Endothelial cell of umbilical vein (primary cell): ENCODE measurements at regions of chr3 and their contacts with region 1.

Region 1: GRCh38 chr3:72270072-72270681 is 485.2 kb upstream of the PROK2 start:
- DNase-seq: peak; percentile 78
- H3K4me3 ChIP-seq: no peak overlapping the region
- H3K27ac ChIP-seq: no peak overlapping the region
- H3K4me1 ChIP-seq: peaks cover 22% of the 10 kb centered on the region
- H3K27me3 ChIP-seq: peaks cover 17 to 21% of the 10 kb centered on the region in 2 experiments
- CTCF ChIP-seq: no peak
- POLR2A ChIP-seq: no peak

Region 2: GRCh38 chr3:71875461-71875947 is 394.7 kb before region 1 on chr3:
- CTCF ChIA-PET with region 1: interaction called, 7 read pairs
- POLR2A ChIA-PET with region 1: no interaction called
- dilution Hi-C with region 1: no loop called
- intact Hi-C with region 1: loop called (anchors 1 kb)
- DNase-seq: peak; percentile 74
- H3K4me3 ChIP-seq: no peak overlapping the region
- H3K27ac ChIP-seq: no peak overlapping the region
- H3K4me1 ChIP-seq: no peaks in the 10 kb centered on the region
- H3K27me3 ChIP-seq: no peaks in the 10 kb centered on the region
- CTCF ChIP-seq: peak; percentile 76 to 90
- POLR2A ChIP-seq: no peak

Region 3: DNA sequence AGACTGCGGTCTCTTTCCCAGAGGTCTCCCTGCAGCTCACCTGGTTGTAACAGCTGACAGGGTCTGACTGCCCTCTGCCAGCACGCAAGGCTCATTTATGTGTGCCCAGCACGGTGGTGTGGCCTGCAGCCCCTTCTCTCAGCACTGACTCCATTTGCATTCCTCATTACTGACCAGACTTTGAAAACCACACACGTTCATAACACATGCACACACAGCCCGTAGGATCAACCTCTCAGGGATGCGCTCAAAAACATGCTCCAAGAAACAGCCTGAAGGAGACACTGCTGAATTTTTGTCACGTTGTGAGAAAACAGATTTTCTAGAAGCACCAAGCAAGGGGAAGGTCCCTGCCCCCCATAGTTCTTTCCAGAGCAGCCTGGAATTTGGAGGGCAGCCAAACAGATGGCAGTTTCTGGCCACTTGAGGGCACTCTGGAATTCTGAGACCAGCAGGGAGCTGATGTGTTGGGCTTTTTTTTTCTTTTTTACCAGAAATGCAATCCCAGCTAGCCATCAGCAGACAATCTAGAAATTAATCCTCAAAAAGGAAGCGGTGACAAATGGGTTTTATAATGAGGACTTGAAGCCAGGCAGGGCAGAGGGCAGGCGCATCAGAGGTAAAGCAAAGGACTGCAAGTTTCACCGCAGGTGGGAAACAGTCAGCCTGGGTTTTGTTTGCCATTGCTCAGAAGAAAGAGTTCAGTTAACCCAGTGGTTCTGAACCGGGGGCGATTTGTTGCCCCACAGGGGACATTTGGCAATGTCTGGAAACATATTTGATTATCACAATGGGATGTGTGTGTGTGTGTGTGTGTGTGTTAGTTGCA is 314.7 kb before region 1 on chr3:
- CTCF ChIA-PET with region 1: interaction called, 13 read pairs
- POLR2A ChIA-PET with region 1: no interaction called
- dilution Hi-C with region 1: no loop called
- intact Hi-C with region 1: loop called (anchors 1 kb)
- DNase-seq: peak; percentile 77
- H3K4me3 ChIP-seq: no peak overlapping the region
- H3K27ac ChIP-seq: no peak overlapping the region
- H3K4me1 ChIP-seq: no peaks in the 10 kb centered on the region
- H3K27me3 ChIP-seq: peaks cover 0 to 9% of the 10 kb centered on the region in 2 experiments
- CTCF ChIP-seq: peak; percentile 65 to 77
- POLR2A ChIP-seq: no peak

Region 4: DNA sequence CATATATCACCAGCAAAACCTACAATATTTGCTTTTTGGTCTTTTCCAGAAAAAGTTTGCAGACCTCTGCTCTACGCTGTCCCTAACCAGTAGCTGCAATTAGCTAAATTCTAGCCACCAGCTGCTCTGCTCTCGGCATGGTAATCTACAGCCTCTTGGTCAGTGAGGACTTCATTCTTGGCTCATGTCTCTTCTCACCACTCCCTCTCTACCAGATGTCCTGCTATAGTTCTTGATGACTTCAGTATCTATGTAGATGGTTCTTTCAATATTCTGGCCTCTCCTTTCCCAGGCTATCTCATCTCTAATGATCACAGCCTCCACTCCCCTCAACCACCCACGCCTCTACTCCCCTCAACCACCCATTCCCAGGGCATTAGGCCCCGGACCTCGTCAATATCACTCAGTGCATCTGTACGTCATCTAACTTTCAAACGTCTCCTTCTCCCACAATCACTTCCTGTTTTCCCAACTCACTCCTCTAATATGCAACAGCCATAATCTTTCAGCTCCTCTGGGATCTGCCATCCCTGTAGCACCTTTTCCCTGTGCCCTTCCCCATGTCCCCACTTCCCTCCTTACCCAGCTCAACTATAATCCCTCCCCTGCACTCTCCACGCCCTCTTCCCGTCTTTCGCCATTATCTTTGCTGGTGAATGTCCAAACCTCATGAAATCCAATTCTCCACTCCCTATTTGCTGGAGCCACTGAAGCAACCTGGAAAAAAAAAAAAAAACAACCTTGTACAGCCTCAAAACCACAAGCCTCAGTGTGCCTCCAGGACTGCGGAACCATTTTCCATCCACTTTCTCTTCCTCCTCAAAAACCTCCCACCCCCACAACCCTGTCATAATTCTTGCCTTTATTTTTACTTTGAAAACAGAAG is 55.9 kb before region 1 on chr3:
- CTCF ChIA-PET with region 1: no interaction called
- POLR2A ChIA-PET with region 1: no interaction called
- dilution Hi-C with region 1: no loop called
- intact Hi-C with region 1: no loop called
- DNase-seq: no peak
- H3K4me3 ChIP-seq: no peak overlapping the region
- H3K27ac ChIP-seq: no peak overlapping the region
- H3K4me1 ChIP-seq: no peaks in the 10 kb centered on the region
- H3K27me3 ChIP-seq: peaks cover 0 to 2% of the 10 kb centered on the region in 2 experiments
- CTCF ChIP-seq: no peak
- POLR2A ChIP-seq: no peak

Region 5: DNA sequence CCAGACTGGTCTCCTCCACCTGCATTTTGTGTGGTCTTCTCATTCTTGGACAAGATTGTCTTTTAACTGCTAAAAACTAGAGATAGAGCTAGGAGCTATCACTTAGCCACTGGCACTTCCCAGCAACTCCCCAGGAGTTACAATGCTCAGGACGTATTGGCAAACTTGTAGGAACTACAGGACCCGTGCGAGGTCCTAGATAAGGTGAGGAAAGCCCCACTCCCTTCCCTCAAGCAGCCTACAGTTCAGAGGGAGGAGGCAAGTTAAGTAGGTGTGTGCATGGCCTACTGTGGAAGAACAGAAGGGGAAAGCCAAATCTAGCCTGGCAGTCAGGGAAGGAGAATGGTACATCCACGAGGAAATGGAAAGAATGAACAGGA is 19.5 kb after region 1 on chr3:
- CTCF ChIA-PET with region 1: interaction called, 3 read pairs
- POLR2A ChIA-PET with region 1: no interaction called
- dilution Hi-C with region 1: no loop called
- intact Hi-C with region 1: loop called (anchors 2 kb)
- DNase-seq: no peak
- H3K4me3 ChIP-seq: no peak overlapping the region
- H3K27ac ChIP-seq: no peak overlapping the region
- H3K4me1 ChIP-seq: no peaks in the 10 kb centered on the region
- H3K27me3 ChIP-seq: peaks cover 83 to 91% of the 10 kb centered on the region in 2 experiments
- CTCF ChIP-seq: no peak
- POLR2A ChIP-seq: no peak

Region 6: GRCh38 chr3:72299321-72299802 is 29.2 kb after region 1 on chr3:
- CTCF ChIA-PET with region 1: interaction called, 3 read pairs
- POLR2A ChIA-PET with region 1: interaction called, 3 read pairs
- dilution Hi-C with region 1: no loop called
- intact Hi-C with region 1: loop called (anchors 2 kb)
- DNase-seq: peak; percentile 96
- H3K4me3 ChIP-seq: no peak overlapping the region
- H3K27ac ChIP-seq: no peak overlapping the region
- H3K4me1 ChIP-seq: peaks cover 23% of the 10 kb centered on the region
- H3K27me3 ChIP-seq: peaks cover 75 to 76% of the 10 kb centered on the region in 2 experiments
- CTCF ChIP-seq: no peak
- POLR2A ChIP-seq: no peak

Region 7: DNA sequence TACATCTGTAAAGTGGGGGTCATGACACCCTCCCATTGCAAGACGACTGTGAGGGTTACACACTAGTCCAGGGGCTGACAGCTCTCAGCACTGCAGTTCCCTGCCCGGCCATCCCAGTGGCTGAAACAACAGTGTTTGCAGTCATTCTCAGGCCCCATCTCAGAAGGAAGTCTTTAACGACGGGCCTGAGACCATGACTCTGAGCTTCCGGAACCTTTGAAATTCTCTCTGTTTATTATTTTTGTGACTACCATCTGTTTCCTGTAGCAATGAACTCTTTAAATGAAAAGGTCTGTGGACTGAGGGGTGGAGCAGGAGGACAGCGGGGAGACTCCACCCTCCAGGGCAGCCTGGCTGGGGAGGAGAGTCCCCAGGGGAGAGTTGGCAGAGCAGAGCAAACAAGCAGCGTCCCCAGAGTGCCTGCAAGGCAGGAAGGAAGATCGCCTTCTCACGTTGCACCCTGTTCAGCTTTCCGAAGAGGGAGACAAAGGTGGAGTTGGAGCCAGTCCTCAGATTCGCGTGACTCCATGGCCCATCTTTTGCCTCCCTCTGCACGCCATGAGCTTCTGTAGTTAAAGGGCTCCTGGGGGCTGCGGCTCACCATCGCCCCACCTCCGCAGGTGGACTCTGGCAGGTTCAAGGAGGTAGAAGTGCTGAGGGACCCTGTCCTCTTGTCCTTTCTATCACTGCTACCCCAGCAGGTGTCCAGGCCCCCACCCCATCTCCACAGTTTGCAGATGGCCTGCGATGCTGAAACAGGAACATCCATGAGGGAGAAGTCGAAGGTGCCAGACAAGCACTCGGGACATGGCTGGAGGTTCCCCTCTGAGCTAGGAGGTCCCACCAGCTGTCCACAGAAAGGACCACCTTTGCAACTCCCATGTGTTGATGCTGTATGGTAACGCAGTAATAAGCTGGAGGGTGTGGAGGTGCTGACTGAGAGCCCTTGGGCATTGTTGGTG is 40.5 kb after region 1 on chr3:
- CTCF ChIA-PET with region 1: no interaction called
- POLR2A ChIA-PET with region 1: no interaction called
- dilution Hi-C with region 1: no loop called
- intact Hi-C with region 1: loop called (anchors 1 kb)
- DNase-seq: peak; percentile 97
- H3K4me3 ChIP-seq: no peak overlapping the region
- H3K27ac ChIP-seq: peak overlapping the region; percentile 57
- H3K4me1 ChIP-seq: peaks cover 18% of the 10 kb centered on the region
- H3K27me3 ChIP-seq: peaks cover 17 to 20% of the 10 kb centered on the region in 2 experiments
- CTCF ChIP-seq: peak in 1 of 2 donors; percentile 37
- POLR2A ChIP-seq: peak; percentile 49